ENCODE measurements at regions of chr20 and their contacts with region 1.

Region 1: GRCh38 chr20:4083098-4083865 is 67.9 kb upstream of the RNF24 start:
- DNase-seq: no peak
- H3K4me3 Mint-ChIP-seq: no peak overlapping the region
- H3K27ac Mint-ChIP-seq: peak overlapping the region; percentile 97
- H3K4me1 Mint-ChIP-seq: peaks cover 57% of the 10 kb centered on the region
- H3K27me3 Mint-ChIP-seq: peaks cover 20% of the 10 kb centered on the region

Region 2: GRCh38 chr20:4014031-4014474 is 69.2 kb before region 1 on chr20:
- CTCF ChIA-PET with region 1: interaction called, 48 read pairs
- DNase-seq: peak; percentile 59
- H3K4me3 Mint-ChIP-seq: peak overlapping the region; percentile 91
- H3K27ac Mint-ChIP-seq: no peak overlapping the region
- H3K4me1 Mint-ChIP-seq: peaks cover 44% of the 10 kb centered on the region
- H3K27me3 Mint-ChIP-seq: peaks cover 10% of the 10 kb centered on the region

Region 3: DNA sequence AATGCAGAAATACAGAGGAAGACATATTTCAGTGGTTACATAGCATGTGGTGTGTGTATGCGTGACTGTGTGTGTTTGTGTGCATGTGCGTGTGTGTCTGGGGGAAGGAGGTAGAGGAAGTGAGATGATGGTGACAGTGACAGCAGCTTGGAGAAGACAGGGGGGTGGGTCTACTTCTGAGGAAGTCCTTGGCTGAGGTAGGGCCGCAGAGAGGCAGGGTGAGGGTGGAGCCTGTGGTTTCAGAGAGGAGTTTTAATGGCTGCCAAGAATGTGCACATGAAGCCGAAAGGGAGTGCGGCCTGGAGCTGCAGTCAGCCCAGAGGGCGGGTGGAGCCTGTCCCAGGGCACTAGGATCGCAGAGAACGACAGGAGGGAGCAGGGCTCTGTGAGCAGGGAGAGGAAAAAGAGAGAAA is 45.2 kb before region 1 on chr20:
- CTCF ChIA-PET with region 1: interaction called, 22 read pairs
- DNase-seq: peak; percentile 93
- H3K4me3 Mint-ChIP-seq: peak overlapping the region; percentile 72
- H3K27ac Mint-ChIP-seq: peak overlapping the region; percentile 92
- H3K4me1 Mint-ChIP-seq: peaks cover 31% of the 10 kb centered on the region
- H3K27me3 Mint-ChIP-seq: no peaks in the 10 kb centered on the region

Region 4: GRCh38 chr20:4067600-4068261 is 15.6 kb before region 1 on chr20:
- CTCF ChIA-PET with region 1: interaction called, 31 read pairs
- DNase-seq: no peak
- H3K4me3 Mint-ChIP-seq: no peak overlapping the region
- H3K27ac Mint-ChIP-seq: no peak overlapping the region
- H3K4me1 Mint-ChIP-seq: peaks cover 30% of the 10 kb centered on the region
- H3K27me3 Mint-ChIP-seq: peaks cover 10% of the 10 kb centered on the region

Region 5: DNA sequence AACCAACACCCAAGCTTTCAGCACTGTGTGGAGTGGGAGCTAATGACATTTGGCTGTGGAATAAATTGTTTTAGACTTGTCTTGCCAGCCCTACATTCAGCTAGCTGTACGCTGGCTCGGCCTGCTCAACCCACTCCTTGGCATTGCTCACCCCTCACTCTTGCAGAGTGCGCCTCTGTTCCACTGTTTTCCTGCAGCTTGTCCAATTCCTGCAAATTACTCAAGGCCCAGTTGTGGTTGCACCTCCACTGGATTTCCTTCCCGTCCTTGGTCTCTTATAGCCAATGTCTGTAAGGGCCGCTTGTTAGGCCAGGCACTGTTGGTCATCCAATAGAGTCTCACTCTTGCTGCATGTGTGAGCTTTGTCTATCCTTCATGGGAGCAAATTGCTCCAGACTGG is 221.3 kb after region 1 on chr20:
- CTCF ChIA-PET with region 1: no interaction called
- DNase-seq: no peak
- H3K4me3 Mint-ChIP-seq: no peak overlapping the region
- H3K27ac Mint-ChIP-seq: no peak overlapping the region
- H3K4me1 Mint-ChIP-seq: no peaks in the 10 kb centered on the region
- H3K27me3 Mint-ChIP-seq: peaks cover 31% of the 10 kb centered on the region

Region 6: GRCh38 chr20:4375881-4376280 is 292.6 kb after region 1 on chr20:
- CTCF ChIA-PET with region 1: no interaction called
- DNase-seq: no peak
- H3K4me3 Mint-ChIP-seq: no peak overlapping the region
- H3K27ac Mint-ChIP-seq: no peak overlapping the region
- H3K4me1 Mint-ChIP-seq: peaks cover 16% of the 10 kb centered on the region
- H3K27me3 Mint-ChIP-seq: peaks cover 36% of the 10 kb centered on the region

Measured in activated naive CD4-positive, alpha-beta T cell treated with anti-CD3 and anti-CD28 coated beads, Interleukin-2, amount 10 ng/mL, durations not matched to agents 7 days and 5 days (primary cell).